ENCODE measurements at regions of chr12 and their contacts with region 1.

Region 1: DNA sequence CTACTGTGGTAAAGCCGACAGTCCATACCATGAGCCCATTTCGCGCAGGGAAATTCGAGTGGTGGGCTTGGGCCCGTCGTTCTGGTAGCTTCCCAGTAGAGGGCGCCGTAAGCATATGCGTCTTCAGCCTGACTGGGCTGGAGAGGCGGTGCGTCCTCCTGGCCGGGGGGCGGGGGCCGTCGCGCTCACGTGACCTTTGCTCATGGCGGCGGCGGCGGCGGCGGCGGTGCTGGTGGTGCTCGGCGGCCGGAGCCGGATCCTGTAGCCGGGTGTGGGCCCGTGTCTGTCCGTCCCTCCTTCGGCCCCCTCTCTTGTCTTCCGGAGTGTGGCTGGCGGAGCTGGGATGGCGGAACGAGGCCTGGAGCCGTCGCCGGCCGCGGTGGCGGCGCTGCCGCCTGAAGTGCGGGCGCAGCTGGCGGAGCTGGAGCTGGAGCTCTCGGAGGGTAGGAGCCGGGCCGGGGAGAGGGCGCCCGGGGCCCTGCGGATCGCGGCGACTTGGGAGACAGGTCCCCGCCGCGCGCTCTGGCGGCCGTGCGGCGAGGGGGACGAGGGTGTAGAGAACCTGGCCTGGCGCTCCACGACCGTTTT is at the start of gene DIP2B:
- DNase-seq: peak; percentile 96
- H3K4me3 ChIP-seq: peak within 1 kb of the TSS; percentile 81 to 97
- H3K27ac ChIP-seq: peak within 1 kb of the TSS; percentile 79 to 81
- H3K4me1 ChIP-seq: peaks cover 8 to 16% of the 10 kb centered on the region in 2 experiments; a peak in 3 of 4 replicates
- H3K27me3 ChIP-seq: no peaks in the 10 kb centered on the region
- CTCF ChIP-seq: peak; percentile 82
- EP300 ChIP-seq: peak in 1 of 2 experiments; percentile 64; a peak in 1 of 4 replicates
- RAD21 ChIP-seq: peak; percentile 94
- polyA plus RNA-seq, gene DIP2B: 6.6 and 8.6 TPM in 2 replicates

Region 2: DNA sequence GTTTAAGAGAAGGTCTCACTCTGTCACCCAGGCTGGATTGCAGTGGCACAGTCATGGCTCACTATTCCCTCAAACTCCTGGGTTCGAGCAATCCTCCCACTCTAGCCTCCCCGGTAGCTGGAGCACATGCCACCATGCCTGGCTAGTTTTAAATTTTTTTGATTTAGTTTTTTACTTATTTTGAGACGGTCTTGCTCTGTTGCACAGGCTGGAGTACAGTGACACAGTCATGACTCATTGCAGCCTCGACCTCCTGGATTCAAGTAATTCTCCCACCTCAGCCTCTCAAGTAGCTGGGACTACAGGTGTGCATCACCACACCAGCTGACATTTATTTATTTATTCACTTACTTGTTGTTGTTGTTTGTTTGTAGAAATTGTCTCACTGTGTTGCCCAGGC is 22.3 kb before region 1 on chr12:
- CTCF ChIA-PET with region 1: interaction called, 14 read pairs
- POLR2A ChIA-PET with region 1: no interaction called
- DNase-seq: no peak
- H3K4me3 ChIP-seq: no peak overlapping the region
- H3K27ac ChIP-seq: no peak overlapping the region
- H3K4me1 ChIP-seq: no peaks in the 10 kb centered on the region
- H3K27me3 ChIP-seq: no peaks in the 10 kb centered on the region
- CTCF ChIP-seq: no peak
- EP300 ChIP-seq: no peak
- RAD21 ChIP-seq: no peak

Region 3: GRCh38 chr12:50488801-50489200 is 16.1 kb before region 1 on chr12:
- CTCF ChIA-PET with region 1: interaction called, 14 read pairs
- POLR2A ChIA-PET with region 1: no interaction called
- DNase-seq: no peak
- H3K4me3 ChIP-seq: no peak overlapping the region
- H3K27ac ChIP-seq: no peak overlapping the region
- H3K4me1 ChIP-seq: no peaks in the 10 kb centered on the region
- H3K27me3 ChIP-seq: no peaks in the 10 kb centered on the region
- CTCF ChIP-seq: no peak
- EP300 ChIP-seq: no peak
- RAD21 ChIP-seq: no peak

Region 4: DNA sequence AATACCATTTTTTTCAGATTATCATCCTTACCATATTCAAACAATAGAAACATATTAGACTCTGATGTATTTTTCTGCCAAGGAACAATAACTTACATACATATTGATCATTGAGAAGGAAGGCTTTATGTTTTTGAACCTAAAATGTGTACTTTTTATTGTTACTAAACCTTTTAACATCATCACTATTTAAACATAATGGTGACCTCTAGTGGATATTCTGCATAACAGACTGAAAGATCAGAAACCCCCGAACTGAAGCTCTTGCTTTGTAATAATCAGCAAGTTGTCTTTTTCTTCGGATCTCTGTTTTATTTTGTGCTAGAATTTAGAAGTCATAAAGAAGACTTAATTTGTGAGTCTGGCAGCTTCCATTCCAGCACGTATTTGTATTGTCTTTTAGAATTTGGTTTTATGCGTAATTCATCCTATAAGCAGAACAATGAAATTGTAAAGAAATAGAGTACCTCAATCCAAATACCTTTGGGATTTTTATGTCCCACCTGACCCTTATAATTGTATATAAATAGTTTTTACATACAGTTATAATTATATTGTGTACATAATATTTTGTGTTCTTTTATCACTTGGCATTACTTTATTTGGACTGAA is 133.1 kb after region 1 on chr12:
- CTCF ChIA-PET with region 1: interaction called, 165 read pairs
- POLR2A ChIA-PET with region 1: interaction called, 4 read pairs
- DNase-seq: peak; percentile 45
- H3K4me3 ChIP-seq: no peak overlapping the region
- H3K27ac ChIP-seq: no peak overlapping the region
- H3K4me1 ChIP-seq: peaks cover 3 to 29% of the 10 kb centered on the region in 2 experiments; a peak in 3 of 4 replicates
- H3K27me3 ChIP-seq: no peaks in the 10 kb centered on the region
- CTCF ChIP-seq: peak; percentile 81
- EP300 ChIP-seq: no peak
- RAD21 ChIP-seq: peak; percentile 78

Region 5: DNA sequence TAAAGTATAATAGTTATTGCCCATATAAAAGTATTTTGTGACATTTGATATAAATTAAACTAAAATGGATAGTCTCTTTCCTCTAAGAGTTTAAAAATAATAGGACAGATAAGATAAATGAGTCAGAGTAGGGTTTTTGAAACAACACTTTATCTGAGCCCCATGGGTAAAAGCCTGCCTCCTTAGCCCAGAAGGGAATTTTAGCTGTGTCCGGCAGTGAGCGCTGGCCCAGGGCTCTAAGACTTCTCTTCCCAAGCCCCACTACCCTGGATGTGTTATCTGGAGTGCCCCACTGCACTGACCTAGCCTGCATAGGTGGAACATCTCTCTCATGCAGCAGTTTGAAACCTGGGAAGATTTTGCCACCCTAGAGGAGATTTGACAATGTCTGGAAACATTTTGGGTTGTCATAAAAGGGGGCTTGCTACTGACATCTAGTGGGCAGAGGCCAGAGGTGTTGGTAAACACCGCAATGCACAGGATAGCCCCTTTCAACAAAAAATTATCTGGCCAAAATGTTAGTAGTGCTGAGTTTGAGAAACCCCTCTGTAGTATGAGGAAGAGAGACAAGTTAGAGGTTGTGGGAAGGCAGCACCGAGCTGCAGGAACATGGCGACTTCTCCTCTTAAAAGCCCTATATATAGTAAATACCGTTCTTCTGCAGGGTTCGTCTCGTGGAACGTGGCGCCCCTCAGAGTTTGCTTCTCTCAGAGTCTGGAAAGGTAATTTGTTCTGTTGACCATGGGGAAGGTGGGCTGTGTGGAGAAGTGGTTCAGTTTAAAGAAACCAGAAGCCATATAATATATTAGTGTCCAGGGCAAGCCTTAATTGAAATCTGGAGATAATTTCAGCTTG is 229.7 kb after region 1 on chr12:
- CTCF ChIA-PET with region 1: interaction called, 24 read pairs
- POLR2A ChIA-PET with region 1: interaction called, 4 read pairs
- DNase-seq: peak; percentile 63
- H3K4me3 ChIP-seq: no peak overlapping the region; a peak in 1 of 4 replicates
- H3K27ac ChIP-seq: no peak overlapping the region
- H3K4me1 ChIP-seq: no peaks in the 10 kb centered on the region; a peak in 1 of 4 replicates
- H3K27me3 ChIP-seq: no peaks in the 10 kb centered on the region
- CTCF ChIP-seq: peak; percentile 78
- EP300 ChIP-seq: no peak
- RAD21 ChIP-seq: peak; percentile 74

Measured in SK-N-SH (cell line).